PC-9 (cell line): ENCODE measurements at regions of chr1 and their contacts with region 1.

Region 1: DNA sequence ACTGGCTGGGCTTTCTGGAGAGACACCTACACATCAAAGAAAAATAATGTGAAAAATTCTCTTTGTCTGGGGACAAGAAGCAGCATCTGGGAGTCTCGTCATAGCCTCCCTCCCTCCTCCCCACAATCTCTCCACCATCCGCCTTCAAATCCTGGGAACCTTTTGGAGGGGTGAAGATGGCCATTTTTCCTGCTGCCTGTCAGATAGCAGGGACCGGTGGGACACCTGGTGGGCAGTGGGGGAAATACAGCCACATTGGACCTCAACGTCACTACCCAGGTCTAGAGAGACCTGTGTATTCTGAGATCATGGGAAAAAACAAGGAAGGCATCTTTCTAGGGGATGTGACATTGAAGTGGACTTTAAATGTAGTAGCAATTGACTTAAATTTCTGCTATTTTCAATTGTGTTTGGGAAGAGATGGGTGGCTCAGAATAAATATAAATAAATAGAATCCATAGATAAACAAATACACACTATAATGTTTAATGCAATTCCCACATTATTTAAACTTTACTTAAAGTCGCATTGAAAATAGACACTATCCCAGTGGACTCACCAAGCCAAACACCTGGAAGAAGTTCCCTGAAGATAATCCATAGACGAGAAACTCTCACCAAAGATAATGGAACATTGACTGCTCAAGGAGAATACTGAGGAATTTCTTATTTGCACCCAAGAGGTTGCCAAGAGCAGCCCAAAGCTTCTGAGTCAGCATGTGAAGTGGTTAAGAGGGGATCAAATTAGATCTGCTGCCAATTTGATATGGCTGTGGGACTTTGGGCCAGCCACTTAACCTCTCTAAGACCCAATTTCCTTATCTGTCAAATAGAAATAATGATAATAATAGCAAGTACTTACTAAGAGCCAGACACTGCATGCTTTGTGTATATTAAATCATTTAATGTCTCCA is 147.6 kb upstream of the CAMK1G start:
- DNase-seq: peak; percentile 64 to 88
- H3K4me3 ChIP-seq: no peak overlapping the region
- H3K27ac ChIP-seq: peak overlapping the region; percentile 98
- H3K4me1 ChIP-seq: peaks cover 48% of the 10 kb centered on the region
- H3K27me3 ChIP-seq: no peaks in the 10 kb centered on the region
- CTCF ChIP-seq: peak; percentile 98

Region 2: GRCh38 chr1:207828485-207829158 is 1607.3 kb before region 1 on chr1:
- CTCF ChIA-PET with region 1: no interaction called
- POLR2A ChIA-PET with region 1: no interaction called
- intact Hi-C with region 1: loop called (anchors 10 kb)
- DNase-seq: peak; percentile 56 to 66
- H3K4me3 ChIP-seq: no peak overlapping the region
- H3K27ac ChIP-seq: no peak overlapping the region
- H3K4me1 ChIP-seq: peaks cover 35% of the 10 kb centered on the region
- H3K27me3 ChIP-seq: no peaks in the 10 kb centered on the region
- CTCF ChIP-seq: peak; percentile 79

Region 3: GRCh38 chr1:209207701-209208286 is 228.1 kb before region 1 on chr1:
- CTCF ChIA-PET with region 1: interaction called, 3 read pairs
- POLR2A ChIA-PET with region 1: interaction called, 4 read pairs
- intact Hi-C with region 1: loop called (anchors 1 kb)
- DNase-seq: peak in 1 of 2 experiments; percentile 47
- H3K4me3 ChIP-seq: no peak overlapping the region
- H3K27ac ChIP-seq: no peak overlapping the region
- H3K4me1 ChIP-seq: no peaks in the 10 kb centered on the region
- H3K27me3 ChIP-seq: no peaks in the 10 kb centered on the region; the same call in 1 of the 2 replicates
- CTCF ChIP-seq: 0 out of 2 replicates have a peak, but pooled peaks have one; percentile 20

Region 4: DNA sequence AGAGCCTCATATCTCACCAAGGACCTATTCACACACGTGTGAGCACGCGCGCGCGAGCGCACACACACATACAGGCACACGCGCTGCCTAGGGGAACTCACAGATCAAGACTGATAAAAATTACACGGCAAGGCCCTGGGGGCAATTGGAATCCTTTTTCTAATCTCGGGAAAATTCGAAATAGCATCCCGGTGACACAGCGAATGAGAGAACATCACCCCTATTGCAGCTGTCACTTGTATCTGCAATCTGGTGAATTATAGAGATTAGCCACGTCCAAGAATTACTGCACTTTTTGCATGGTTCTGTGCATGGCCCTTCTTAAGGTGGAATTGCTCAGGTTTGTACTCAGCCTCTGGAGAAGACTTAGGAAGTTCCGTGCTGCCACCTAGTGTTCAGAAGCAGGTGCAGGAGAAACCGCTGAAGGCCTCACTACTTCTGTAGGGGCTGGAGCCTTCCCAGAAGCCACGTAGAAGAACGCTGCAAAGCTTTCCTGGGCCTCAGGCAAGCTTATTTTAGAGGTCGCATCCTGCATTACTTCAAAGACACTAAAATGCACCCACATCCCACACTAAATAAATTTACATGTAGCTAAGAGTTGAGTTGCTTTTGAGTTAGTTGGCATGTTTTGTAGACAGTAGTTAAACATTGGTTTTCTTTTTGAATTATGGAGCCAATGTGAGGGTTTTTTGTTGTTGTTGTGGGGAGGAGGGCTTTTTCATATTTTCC is 81.6 kb before region 1 on chr1:
- CTCF ChIA-PET with region 1: interaction called, 4 read pairs
- POLR2A ChIA-PET with region 1: no interaction called
- intact Hi-C with region 1: loop called (anchors 1 kb)
- DNase-seq: peak; percentile 78 to 79
- H3K4me3 ChIP-seq: no peak overlapping the region
- H3K27ac ChIP-seq: no peak overlapping the region
- H3K4me1 ChIP-seq: peaks cover 31% of the 10 kb centered on the region
- H3K27me3 ChIP-seq: no peaks in the 10 kb centered on the region
- CTCF ChIP-seq: peak; percentile 92

Region 5: DNA sequence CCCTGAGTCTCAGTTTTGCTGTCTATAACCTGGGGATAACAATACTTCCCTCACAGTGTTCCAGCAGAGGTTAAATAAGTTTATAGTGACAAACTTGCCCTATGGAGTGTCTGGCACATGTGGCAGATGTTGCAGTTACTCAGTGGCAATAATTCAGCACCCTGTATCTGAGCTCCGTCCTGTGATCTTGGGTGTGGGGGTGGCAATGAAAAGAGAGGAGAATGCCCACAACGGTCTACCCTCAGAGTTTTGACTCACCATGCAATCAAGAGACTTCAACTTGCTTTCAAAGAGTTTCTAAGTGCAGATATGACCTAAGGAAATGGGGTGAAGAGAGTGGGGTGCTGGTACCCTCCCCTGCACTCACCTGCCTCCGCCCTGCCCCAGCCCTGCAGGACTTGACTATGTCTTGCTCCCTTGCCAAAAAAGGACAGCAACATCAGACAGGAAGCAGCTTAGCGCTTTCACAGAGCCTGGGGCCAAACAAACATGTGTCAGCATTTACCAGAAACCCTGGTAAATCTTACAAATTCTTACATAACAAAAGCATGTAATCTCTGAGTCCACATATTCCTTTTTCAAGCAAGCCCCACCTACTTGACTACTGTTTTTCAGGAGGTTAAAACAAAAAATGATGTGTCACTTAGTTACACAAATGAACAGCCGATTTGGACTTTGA is 37.5 kb before region 1 on chr1:
- CTCF ChIA-PET with region 1: interaction called, 3 read pairs
- POLR2A ChIA-PET with region 1: interaction called, 6 read pairs
- intact Hi-C with region 1: loop called (anchors 1 kb)
- DNase-seq: peak; percentile 88 to 98
- H3K4me3 ChIP-seq: no peak overlapping the region; the same call in 1 of the 2 replicates
- H3K27ac ChIP-seq: peak overlapping the region; percentile 99
- H3K4me1 ChIP-seq: peaks cover 64% of the 10 kb centered on the region
- H3K27me3 ChIP-seq: no peaks in the 10 kb centered on the region
- CTCF ChIP-seq: no peak

Region 6: DNA sequence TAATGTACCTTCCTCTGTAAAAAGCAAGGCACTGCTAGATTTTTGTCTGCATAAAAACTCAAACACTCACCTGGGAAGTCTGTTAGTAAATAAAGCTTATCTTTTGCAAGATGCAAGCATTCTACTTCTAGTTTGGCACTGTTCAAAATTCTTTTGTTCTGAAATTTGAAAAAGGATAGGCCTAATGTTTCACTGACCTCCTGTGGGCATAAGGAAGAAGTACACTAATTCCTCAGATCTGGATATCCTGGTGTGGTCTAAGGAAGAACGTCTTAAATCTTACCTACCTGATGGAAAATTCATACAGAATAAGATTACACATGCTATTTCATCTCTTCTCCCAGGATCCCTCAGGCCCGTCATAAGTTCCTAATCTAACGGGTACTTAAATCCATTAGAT is 54.1 kb after region 1 on chr1:
- CTCF ChIA-PET with region 1: no interaction called
- POLR2A ChIA-PET with region 1: no interaction called
- intact Hi-C with region 1: loop called (anchors 1 kb)
- DNase-seq: peak in 1 of 2 experiments; percentile 59
- H3K4me3 ChIP-seq: no peak overlapping the region
- H3K27ac ChIP-seq: no peak overlapping the region
- H3K4me1 ChIP-seq: no peaks in the 10 kb centered on the region
- H3K27me3 ChIP-seq: no peaks in the 10 kb centered on the region
- CTCF ChIP-seq: peak; percentile 80